WTC11 (cell line): ENCODE measurements at regions of chr11 and their contacts with region 1.

Region 1: DNA sequence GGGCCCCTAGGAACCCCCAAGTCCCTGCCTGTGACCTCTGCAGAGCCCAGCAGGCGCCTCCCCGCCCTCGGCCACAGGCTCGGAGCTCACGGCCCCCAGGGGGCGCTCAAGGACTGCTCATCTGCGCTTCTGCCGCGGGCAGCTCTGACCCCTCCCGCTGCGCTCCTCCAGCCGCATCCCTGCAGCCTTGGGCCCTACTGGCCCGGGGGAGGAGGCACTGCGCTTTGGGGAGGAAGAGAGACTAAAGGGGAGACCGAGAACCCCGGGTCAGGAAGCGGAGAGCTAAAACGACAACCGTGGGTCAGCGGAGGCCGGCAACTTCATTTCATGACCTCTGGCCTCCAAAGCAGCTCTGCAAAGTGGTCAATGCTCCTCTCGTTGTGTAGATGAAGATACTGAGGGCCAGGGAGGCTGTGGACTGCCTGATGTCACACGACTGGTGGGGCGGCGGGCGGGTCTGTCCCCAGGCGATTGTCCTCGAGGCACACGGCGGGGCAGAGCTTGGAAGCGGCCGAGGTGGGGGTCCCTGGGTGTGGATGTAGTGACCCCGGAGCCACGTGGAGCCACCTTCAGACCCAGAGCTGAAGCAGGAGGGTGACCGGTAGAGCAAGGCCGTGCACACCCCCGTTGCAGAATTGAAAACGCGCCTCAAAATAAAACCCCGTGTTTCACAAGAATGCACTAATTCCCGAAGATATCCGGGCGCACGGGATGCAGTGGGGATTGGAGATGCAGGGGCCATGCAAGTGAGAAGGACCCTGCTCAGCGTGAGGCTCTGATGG is 2.7 kb upstream of the KRTAP5-6 start:
- DNase-seq: peak; percentile 92
- ATAC-seq: peak; percentile 86
- H3K4me3 Mint-ChIP-seq: peak overlapping the region; percentile 35; the same call in 1 of the 2 replicates
- H3K27ac Mint-ChIP-seq: no peak overlapping the region
- H3K4me1 Mint-ChIP-seq: peaks cover 3% of the 10 kb centered on the region
- H3K27me3 Mint-ChIP-seq: peaks cover 22% of the 10 kb centered on the region
- CTCF ChIP-seq: peak; percentile 93

Region 2: GRCh38 chr11:1298695-1299492 is 395.4 kb before region 1 on chr11:
- CTCF ChIA-PET with region 1: no interaction called
- POLR2A ChIA-PET with region 1: no interaction called
- DNase-seq: no peak
- ATAC-seq: peak; percentile 57; the same call in 1 of the 2 replicates
- H3K4me3 Mint-ChIP-seq: no peak overlapping the region
- H3K27ac Mint-ChIP-seq: no peak overlapping the region; the same call in 1 of the 2 replicates
- H3K4me1 Mint-ChIP-seq: peaks cover 22% of the 10 kb centered on the region
- H3K27me3 Mint-ChIP-seq: no peaks in the 10 kb centered on the region
- CTCF ChIP-seq: no peak

Region 3: DNA sequence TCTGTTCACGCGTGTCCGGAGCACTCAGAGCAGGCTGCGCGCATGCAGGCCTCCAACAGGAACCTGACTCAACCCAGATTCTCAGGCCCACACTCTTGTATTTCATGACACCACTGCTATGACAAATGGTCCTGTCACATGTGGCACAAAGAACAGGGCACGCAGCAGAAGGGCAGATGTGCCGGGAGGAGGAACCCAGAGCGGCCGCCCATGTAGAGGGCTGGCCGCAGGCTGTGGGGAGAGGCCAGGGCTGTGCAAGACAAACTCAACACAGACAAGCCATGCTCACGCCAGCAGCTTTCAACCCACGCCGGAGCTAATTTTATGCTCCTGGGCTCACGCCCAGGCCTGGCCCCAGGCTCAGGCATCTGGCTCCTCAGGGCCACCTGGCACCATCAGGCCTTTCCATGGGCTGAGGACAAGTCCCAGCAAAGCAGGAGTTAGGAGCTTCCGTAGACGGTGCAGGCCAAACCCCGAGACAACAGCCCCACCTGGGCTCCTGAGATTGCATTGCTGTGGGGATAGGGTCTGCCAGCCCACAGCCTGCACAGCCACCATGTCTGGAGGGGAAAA is 162.2 kb before region 1 on chr11:
- CTCF ChIA-PET with region 1: no interaction called
- POLR2A ChIA-PET with region 1: no interaction called
- DNase-seq: no peak
- ATAC-seq: no peak
- H3K4me3 Mint-ChIP-seq: no peak overlapping the region
- H3K27ac Mint-ChIP-seq: no peak overlapping the region
- H3K4me1 Mint-ChIP-seq: no peaks in the 10 kb centered on the region
- H3K27me3 Mint-ChIP-seq: no peaks in the 10 kb centered on the region
- CTCF ChIP-seq: no peak

Region 4: DNA sequence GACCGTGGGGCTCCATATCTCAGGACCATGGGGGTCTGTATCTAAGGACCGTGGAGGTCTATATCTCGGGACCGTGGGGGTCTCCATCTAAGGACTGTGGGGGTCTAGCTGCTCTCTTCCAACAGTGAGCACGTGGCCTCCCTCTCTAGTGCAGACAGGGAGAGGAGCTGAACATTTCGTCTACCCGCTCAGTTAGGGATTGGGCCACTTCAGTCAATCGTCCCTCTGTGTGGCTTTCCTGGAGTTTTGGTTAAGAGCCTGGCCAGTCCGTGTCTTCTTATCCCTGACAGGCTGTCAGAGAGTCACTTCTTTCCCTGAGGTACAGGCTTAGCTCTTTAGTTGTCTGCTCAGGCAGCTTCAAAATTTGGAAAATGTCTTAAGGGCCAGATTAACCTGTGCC is 112.3 kb before region 1 on chr11:
- CTCF ChIA-PET with region 1: no interaction called
- POLR2A ChIA-PET with region 1: no interaction called
- DNase-seq: no peak
- ATAC-seq: no peak
- H3K4me3 Mint-ChIP-seq: no peak overlapping the region
- H3K27ac Mint-ChIP-seq: no peak overlapping the region
- H3K4me1 Mint-ChIP-seq: no peaks in the 10 kb centered on the region
- H3K27me3 Mint-ChIP-seq: peaks cover 29% of the 10 kb centered on the region
- CTCF ChIP-seq: no peak

Region 5: GRCh38 chr11:1619449-1619848 is 74.8 kb before region 1 on chr11:
- CTCF ChIA-PET with region 1: no interaction called
- POLR2A ChIA-PET with region 1: no interaction called
- DNase-seq: no peak
- ATAC-seq: no peak
- H3K4me3 Mint-ChIP-seq: no peak overlapping the region
- H3K27ac Mint-ChIP-seq: no peak overlapping the region
- H3K4me1 Mint-ChIP-seq: peaks cover 7% of the 10 kb centered on the region
- H3K27me3 Mint-ChIP-seq: peaks cover 46% of the 10 kb centered on the region
- CTCF ChIP-seq: no peak

Region 6: DNA sequence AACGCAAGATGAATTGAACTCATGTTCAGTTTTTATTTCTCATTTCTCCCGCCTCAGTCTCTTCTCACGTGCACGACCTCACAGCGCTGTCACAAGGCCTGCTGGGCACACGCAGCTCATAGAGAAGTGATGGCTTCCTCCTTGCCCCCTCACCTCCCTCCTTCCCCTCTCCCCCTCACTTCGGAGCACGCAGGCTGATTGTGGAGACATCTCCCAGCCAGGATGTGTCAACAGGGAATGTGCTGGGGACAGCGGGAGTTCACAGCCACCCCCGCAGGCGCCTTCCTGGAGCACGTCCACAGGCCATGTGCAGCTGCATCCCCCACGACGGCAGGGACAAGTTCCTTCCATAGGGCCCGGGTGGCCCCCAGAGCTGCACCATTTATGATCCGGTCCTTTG is 26.3 kb before region 1 on chr11:
- CTCF ChIA-PET with region 1: interaction called, 10 read pairs
- POLR2A ChIA-PET with region 1: no interaction called
- DNase-seq: no peak
- ATAC-seq: no peak
- H3K4me3 Mint-ChIP-seq: no peak overlapping the region
- H3K27ac Mint-ChIP-seq: no peak overlapping the region
- H3K4me1 Mint-ChIP-seq: no peaks in the 10 kb centered on the region
- H3K27me3 Mint-ChIP-seq: peaks cover 5% of the 10 kb centered on the region; the same call in 1 of the 2 replicates
- CTCF ChIP-seq: no peak

Region 7: GRCh38 chr11:1763796-1764661 is 69.8 kb after region 1 on chr11 and contains the start of gene CTSD:
- CTCF ChIA-PET with region 1: interaction called, 29 read pairs
- POLR2A ChIA-PET with region 1: no interaction called
- DNase-seq: peak; percentile 87
- ATAC-seq: peak; percentile 73
- H3K4me3 Mint-ChIP-seq: peak within 1 kb of the TSS; percentile 93
- H3K27ac Mint-ChIP-seq: peak within 1 kb of the TSS; percentile 91
- H3K4me1 Mint-ChIP-seq: 0 out of 2 replicates have a peak, but pooled peaks cover 3% of the 10 kb centered on the region
- H3K27me3 Mint-ChIP-seq: 0 out of 2 replicates have a peak, but pooled peaks cover 3% of the 10 kb centered on the region
- CTCF ChIP-seq: no peak
- total RNA-seq, gene CTSD: 194 to 199 TPM (median 198 TPM) in 3 replicates

Region 8: GRCh38 chr11:1827095-1827813 is 133.0 kb after region 1 on chr11:
- CTCF ChIA-PET with region 1: interaction called, 271 read pairs
- POLR2A ChIA-PET with region 1: no interaction called
- DNase-seq: no peak
- ATAC-seq: no peak
- H3K4me3 Mint-ChIP-seq: no peak overlapping the region
- H3K27ac Mint-ChIP-seq: no peak overlapping the region
- H3K4me1 Mint-ChIP-seq: peaks cover 4% of the 10 kb centered on the region; the same call in 1 of the 2 replicates
- H3K27me3 Mint-ChIP-seq: no peaks in the 10 kb centered on the region; the same call in 1 of the 2 replicates
- CTCF ChIP-seq: no peak

Region 9: GRCh38 chr11:1876361-1877063 is 182.3 kb after region 1 on chr11:
- CTCF ChIA-PET with region 1: interaction called, 22 read pairs
- POLR2A ChIA-PET with region 1: no interaction called
- DNase-seq: peak; percentile 77
- ATAC-seq: peak; percentile 85
- H3K4me3 Mint-ChIP-seq: no peak overlapping the region
- H3K27ac Mint-ChIP-seq: no peak overlapping the region
- H3K4me1 Mint-ChIP-seq: 0 out of 2 replicates have a peak, but pooled peaks cover 3% of the 10 kb centered on the region
- H3K27me3 Mint-ChIP-seq: no peaks in the 10 kb centered on the region; the same call in 1 of the 2 replicates
- CTCF ChIP-seq: peak; percentile 21; the same call in 1 of the 2 replicates